ENCODE measurements at regions of chr5 and their contacts with region 1.

Region 1: GRCh38 chr5:157668356-157668755 is 3.0 kb upstream of the C5orf52 start:
- DNase-seq: no peak
- H3K27ac ChIP-seq: no peak overlapping the region
- CTCF ChIP-seq: no peak

Region 2: GRCh38 chr5:157743163-157744050 is 75.1 kb after region 1 on chr5 and contains the start of gene LSM11:
- CTCF ChIA-PET with region 1: interaction called, 10 read pairs
- POLR2A ChIA-PET with region 1: no interaction called
- DNase-seq: peak; percentile 98
- H3K27ac ChIP-seq: peak within 1 kb of the TSS; percentile 64
- CTCF ChIP-seq: peak; percentile 100